Right lobe of liver (tissue), 6 donors: ENCODE measurements at regions of chr10 and their contacts with region 1.

Region 1: DNA sequence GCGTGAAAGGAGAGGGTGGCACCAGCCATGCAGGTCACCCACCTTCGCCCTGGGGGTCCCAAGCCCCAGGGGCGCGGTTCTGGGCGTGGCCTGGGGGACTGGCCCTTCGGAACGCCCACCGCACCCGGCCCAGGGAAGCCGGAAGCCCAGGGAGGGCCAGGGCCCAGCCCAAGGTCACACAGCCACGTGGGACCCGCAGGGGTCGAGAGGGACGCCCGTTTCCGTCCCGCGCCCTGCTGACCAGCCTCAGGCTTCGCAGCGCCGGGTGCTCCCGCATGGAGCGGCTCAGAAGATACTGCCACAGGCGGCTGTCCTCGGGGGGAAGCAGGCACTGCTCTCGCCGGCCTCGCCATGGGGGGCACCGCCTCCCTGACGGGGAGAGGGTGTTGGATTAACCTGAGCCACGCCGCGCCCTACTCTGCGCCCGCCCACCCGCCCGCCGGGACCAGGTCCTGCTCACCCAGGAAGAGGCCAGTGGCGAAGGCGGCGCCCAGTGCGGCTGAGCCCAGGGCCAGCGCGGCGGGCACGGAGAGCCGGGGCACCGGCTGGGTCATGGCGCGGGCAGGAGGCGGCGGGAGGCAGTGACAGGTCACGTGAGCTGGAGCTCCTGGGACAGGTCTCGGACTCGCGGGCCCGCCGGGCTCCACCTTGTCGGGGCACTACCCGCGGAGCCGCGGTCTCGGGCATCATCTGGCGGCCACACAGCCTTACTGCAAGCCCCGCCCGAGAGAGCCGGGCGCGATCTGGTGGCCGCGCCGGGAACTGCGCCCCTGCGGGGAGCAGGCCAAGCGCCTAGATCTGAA is at the start of gene COMTD1:
- DNase-seq: peak; percentile 97 to 99 (median 98)
- ATAC-seq: peak; percentile 79 to 88 (median 84)
- H3K4me3 ChIP-seq: peak within 1 kb of the TSS; percentile 63 to 88 (median 84)
- H3K27ac ChIP-seq: peak within 1 kb of the TSS; percentile 53 to 63 (median 63)
- H3K4me1 ChIP-seq: peaks cover 0 to 18% (median 5%) of the 10 kb centered on the region in 4 donors
- H3K27me3 ChIP-seq: no peaks in the 10 kb centered on the region
- CTCF ChIP-seq: peak; percentile 100
- POLR2A ChIP-seq: no peak
- total RNA-seq, gene COMTD1: 14.3 to 88.7 (median 22.1) TPM

Region 2: GRCh38 chr10:75099952-75100763 is 135.4 kb before region 1 on chr10:
- intact Hi-C with region 1: loop called in 1 of 2 experiments (anchors 10 kb)
- DNase-seq: peak; percentile 80 to 86 (median 84)
- ATAC-seq: peak; percentile 92 to 98 (median 96)
- H3K4me3 ChIP-seq: no peak overlapping the region
- H3K27ac ChIP-seq: no peak overlapping the region
- H3K4me1 ChIP-seq: peaks cover 0 to 4% (median 0%) of the 10 kb centered on the region in 4 donors
- H3K27me3 ChIP-seq: no peaks in the 10 kb centered on the region
- CTCF ChIP-seq: peak; percentile 95 to 98 (median 97)
- POLR2A ChIP-seq: no peak

Region 3: GRCh38 chr10:75111367-75111906 is 124.1 kb before region 1 on chr10 and contains the start of gene SAMD8:
- intact Hi-C with region 1: loop called (anchors 5 to 10 kb)
- DNase-seq: peak; percentile 95 to 96 (median 96)
- ATAC-seq: peak; percentile 87 to 96 (median 92)
- H3K4me3 ChIP-seq: peak within 1 kb of the TSS; percentile 75 to 97 (median 95)
- H3K27ac ChIP-seq: peak within 1 kb of the TSS; percentile 78 to 94 (median 89)
- H3K4me1 ChIP-seq: peaks cover 0 to 6% (median 0%) of the 10 kb centered on the region in 4 donors
- H3K27me3 ChIP-seq: no peaks in the 10 kb centered on the region
- CTCF ChIP-seq: peak; percentile 25 to 40 (median 32)
- POLR2A ChIP-seq: peak; percentile 90
- total RNA-seq, gene SAMD8: 5.7 to 13.2 (median 9.3) TPM

Region 4: GRCh38 chr10:75187961-75188426 is 47.6 kb before region 1 on chr10:
- intact Hi-C with region 1: loop called in 1 of 2 experiments (anchors 10 kb)
- DNase-seq: peak in 2 of 3 donors; percentile 38 to 55
- ATAC-seq: peak; percentile 49 to 68 (median 58)
- H3K4me3 ChIP-seq: no peak overlapping the region
- H3K27ac ChIP-seq: no peak overlapping the region
- H3K4me1 ChIP-seq: peaks cover 0 to 35% (median 5%) of the 10 kb centered on the region in 4 donors
- H3K27me3 ChIP-seq: no peaks in the 10 kb centered on the region
- CTCF ChIP-seq: peak; percentile 65 to 71 (median 70)
- POLR2A ChIP-seq: no peak